ENCODE measurements at regions of chr12 and their contacts with region 1.

Region 1: DNA sequence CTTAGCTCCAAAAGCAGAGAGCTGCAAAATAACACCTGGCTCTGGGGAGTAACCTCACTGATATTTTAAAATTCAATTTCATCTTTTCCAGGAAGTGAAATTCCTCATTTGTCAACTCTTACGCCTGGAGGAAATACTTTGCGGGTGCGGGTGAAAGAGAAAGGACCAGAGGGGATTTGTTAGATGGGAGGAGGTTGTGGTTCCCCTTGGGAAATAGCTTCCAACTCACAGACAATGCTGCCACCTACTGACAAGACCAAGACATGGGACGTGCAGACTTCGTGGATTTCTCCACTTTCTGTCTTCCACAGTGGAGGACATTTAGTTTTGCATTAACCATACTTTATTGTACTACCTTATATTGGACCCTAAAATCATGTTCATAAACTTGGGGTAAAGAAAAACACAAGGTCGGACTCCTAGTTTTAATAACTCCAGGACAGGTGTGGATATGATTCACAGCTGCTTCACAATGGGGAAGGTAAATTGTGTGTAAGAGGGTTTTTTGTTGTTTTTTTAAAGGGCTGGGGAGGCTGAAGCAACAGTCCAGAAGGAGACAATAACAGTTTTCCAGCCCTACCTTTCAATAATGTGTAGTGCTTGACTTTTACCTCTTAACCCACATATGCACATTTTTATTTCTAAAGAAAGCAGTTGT is 10.8 kb downstream of the FBXL14 start:
- DNase-seq: peak in 6 of 10 donors; percentile 42 to 90 (median 70)

Region 2: DNA sequence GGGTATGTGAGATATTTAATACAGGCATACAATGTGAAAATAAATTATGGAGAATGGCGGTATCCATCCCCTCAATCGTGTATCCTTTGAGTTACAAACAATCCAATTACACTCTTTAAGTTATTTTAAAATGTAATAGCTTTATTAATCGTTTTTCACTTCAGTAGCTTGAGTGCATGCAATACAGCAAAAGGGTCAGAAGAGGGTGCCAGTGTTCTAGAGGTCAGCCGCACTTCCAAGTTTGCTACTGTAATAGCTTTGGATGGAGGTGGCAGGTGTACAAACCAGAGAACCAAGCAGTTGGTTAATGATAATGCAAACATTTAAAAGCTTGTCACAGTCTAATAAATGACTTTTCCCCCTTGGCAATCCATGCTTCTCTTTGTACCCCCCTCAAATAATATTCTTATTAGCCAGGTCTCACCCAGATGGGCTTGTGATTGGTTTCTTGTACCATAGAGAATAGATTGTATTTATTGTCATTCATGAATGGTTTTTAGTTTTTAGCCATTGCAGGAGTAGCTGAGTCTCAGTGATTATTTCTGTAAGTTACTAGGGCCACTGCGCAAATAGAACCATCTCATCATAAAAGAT is 465.5 kb before region 1 on chr12:
- intact Hi-C with region 1: loop called (anchors 1 kb)
- DNase-seq: peak in 7 of 10 donors; percentile 40 to 93 (median 65)

Region 3: DNA sequence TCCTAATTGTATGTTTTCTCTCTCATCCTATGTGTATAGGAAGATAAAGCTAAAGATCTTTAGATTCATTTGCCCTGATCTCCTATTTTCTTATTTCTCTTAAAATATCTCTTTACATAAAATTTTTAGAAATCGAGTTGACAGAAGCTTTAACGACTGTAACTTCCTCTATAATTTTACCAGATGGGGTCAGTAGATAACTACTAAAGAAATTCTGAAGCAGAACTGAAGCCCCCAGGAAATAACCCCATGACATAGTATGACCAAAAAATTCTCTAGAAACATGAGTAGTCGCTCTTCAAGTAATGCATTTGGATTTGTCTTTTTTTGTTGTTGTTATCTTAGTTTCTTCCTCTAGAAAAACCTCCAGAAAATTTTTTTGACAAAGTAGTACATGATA is 304.5 kb before region 1 on chr12:
- intact Hi-C with region 1: loop called (anchors 10 kb)
- DNase-seq: no peak

Region 4: DNA sequence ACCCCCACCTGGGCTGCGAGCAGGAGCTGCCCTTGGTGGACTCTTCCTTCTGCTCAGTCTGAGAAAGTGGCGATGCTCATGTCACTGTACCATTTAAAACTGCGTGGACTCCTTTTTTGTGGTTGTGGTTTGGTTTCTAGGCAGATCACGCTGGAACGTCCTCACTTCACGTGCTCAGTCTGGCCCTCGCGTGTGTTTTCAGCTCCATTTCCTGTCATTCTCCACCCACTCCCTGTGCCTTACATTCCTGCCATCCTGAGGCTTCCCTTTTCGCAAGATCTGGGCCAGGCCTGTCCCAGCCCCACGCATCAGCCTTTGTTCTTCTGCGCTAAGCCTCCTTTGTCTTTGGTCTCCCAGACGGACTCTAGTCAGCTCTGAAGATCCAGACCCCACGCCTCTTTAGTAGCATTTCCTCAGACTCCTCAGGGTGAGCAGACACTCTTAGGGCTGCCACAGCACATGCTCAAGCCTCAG is 94.6 kb before region 1 on chr12:
- intact Hi-C with region 1: no loop called
- DNase-seq: no peak

Measured in posterior cingulate gyrus (tissue), 11 donors.